GM10248 (cell line): ENCODE measurements at regions of chr21 and their contacts with region 1.

Region 1: GRCh38 chr21:33360881-33361602 is 36.3 kb downstream of the IFNAR1 start:
- DNase-seq: peak; percentile 80
- CTCF ChIP-seq: peak; percentile 92

Region 2: GRCh38 chr21:33324291-33325221 is 36.5 kb before region 1 on chr21 and contains the start of gene IFNAR1:
- CTCF ChIA-PET with region 1: interaction called, 48 read pairs
- POLR2A ChIA-PET with region 1: no interaction called
- DNase-seq: peak; percentile 96
- CTCF ChIP-seq: no peak

Region 3: GRCh38 chr21:33348706-33349105 is 12.3 kb before region 1 on chr21:
- CTCF ChIA-PET with region 1: interaction called, 102 read pairs
- POLR2A ChIA-PET with region 1: no interaction called
- DNase-seq: no peak
- CTCF ChIP-seq: no peak

Region 4: GRCh38 chr21:33394260-33394659 is 33.2 kb after region 1 on chr21:
- CTCF ChIA-PET with region 1: interaction called, 39 read pairs
- POLR2A ChIA-PET with region 1: no interaction called
- DNase-seq: no peak
- CTCF ChIP-seq: no peak

Region 5: GRCh38 chr21:33428669-33429068 is 67.6 kb after region 1 on chr21:
- CTCF ChIA-PET with region 1: interaction called, 13 read pairs
- POLR2A ChIA-PET with region 1: no interaction called
- DNase-seq: no peak
- CTCF ChIP-seq: no peak

Region 6: GRCh38 chr21:33449616-33450015 is 88.6 kb after region 1 on chr21:
- CTCF ChIA-PET with region 1: interaction called, 65 read pairs
- POLR2A ChIA-PET with region 1: interaction called, 7 read pairs
- DNase-seq: no peak
- CTCF ChIP-seq: no peak

Region 7: DNA sequence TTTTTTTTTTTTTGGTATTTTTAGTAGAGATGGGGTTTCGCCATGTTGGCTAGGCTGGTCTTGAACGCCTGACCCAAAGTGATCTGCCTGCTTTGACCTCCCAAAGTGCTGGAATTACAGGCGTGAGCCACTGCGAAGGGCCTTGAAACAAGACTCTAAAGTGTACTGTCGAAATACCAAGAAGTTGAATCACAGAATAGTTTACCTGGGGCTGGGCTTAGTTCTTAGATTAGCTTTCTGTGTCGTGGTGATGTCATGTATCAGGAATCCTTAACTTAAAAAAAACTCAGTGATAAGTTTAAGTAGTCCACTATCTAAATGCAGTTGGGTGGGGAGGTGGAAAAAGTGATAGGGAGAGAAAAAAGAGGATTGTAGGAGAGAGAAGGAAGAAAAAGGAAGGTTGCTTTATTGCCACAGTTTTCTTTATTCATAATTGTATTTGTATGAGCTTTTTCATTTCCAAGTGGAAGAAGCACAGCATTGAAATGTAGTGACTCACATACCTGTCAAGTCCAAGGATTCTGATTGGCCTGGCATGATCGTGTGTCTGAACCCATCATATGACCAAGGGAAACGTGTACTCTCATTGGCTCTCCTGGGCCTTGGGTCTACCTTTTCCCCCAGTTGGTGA is 294.7 kb after region 1 on chr21:
- CTCF ChIA-PET with region 1: no interaction called
- POLR2A ChIA-PET with region 1: no interaction called
- DNase-seq: no peak
- CTCF ChIP-seq: no peak